ENCODE measurements at regions of chr12 and their contacts with region 1.

Region 1: GRCh38 chr12:92136965-92137721 is 8.5 kb downstream of the BTG1 start:
- DNase-seq: no peak
- H3K4me3 Mint-ChIP-seq: peak overlapping the region; percentile 100
- H3K27ac Mint-ChIP-seq: peak overlapping the region; percentile 91
- H3K4me1 Mint-ChIP-seq: peaks cover 65% of the 10 kb centered on the region
- H3K27me3 Mint-ChIP-seq: no peaks in the 10 kb centered on the region

Region 2: DNA sequence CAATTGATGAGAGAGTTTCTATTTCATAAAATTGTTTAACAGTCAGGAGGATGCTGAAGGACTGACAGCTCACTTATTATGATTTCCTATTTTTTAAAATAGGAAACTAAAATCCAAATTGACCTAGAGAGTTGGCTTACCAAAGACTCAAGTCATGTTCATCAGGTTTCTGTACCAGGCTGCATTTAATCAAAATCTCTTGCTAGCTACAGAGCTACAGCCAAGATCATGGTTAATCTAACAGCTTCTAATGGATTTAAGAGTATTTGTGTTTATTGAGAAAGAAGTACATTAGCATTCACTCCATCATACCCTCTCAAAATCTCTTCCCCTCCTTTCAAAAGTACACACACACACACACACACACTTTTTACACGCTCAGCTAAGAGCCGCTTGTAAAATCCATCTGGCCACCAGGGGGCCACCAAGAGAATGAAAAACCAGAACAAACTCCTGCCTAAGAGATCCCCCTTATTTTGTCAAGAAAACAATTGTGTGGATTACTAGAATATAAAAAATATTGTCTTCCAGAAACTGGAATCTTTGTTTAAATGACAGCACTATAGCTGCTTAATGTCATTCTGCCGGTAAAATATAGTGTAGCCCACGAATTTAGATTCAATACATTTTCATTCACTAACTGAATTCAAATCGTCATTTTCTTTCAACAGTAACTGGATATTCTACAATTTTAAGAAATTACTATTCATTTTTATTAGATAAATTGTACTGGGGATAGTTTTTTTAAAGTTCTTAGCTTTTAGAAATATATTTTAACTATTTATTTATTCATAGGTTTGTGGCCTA is 325.5 kb before region 1 on chr12:
- CTCF ChIA-PET with region 1: interaction called, 31 read pairs
- POLR2A ChIA-PET with region 1: no interaction called
- intact Hi-C with region 1: loop called (anchors 2 kb)
- DNase-seq: peak; percentile 80
- H3K4me3 Mint-ChIP-seq: no peak overlapping the region
- H3K27ac Mint-ChIP-seq: no peak overlapping the region
- H3K4me1 Mint-ChIP-seq: peaks cover 20% of the 10 kb centered on the region
- H3K27me3 Mint-ChIP-seq: no peaks in the 10 kb centered on the region

Region 3: GRCh38 chr12:92049403-92049802 is 87.7 kb before region 1 on chr12:
- CTCF ChIA-PET with region 1: interaction called, 3 read pairs
- POLR2A ChIA-PET with region 1: interaction called, 5 read pairs
- intact Hi-C with region 1: loop called (anchors 2 kb)
- DNase-seq: no peak
- H3K4me3 Mint-ChIP-seq: no peak overlapping the region
- H3K27ac Mint-ChIP-seq: no peak overlapping the region
- H3K4me1 Mint-ChIP-seq: peaks cover 70% of the 10 kb centered on the region
- H3K27me3 Mint-ChIP-seq: no peaks in the 10 kb centered on the region

Region 4: GRCh38 chr12:92078167-92079053 is 58.7 kb before region 1 on chr12:
- CTCF ChIA-PET with region 1: interaction called, 3 read pairs
- POLR2A ChIA-PET with region 1: no interaction called
- intact Hi-C with region 1: loop called (anchors 2 kb)
- DNase-seq: peak; percentile 36
- H3K4me3 Mint-ChIP-seq: no peak overlapping the region
- H3K27ac Mint-ChIP-seq: peak overlapping the region; percentile 70
- H3K4me1 Mint-ChIP-seq: peaks cover 60% of the 10 kb centered on the region
- H3K27me3 Mint-ChIP-seq: no peaks in the 10 kb centered on the region

Region 5: GRCh38 chr12:92123780-92124688 is 13.1 kb before region 1 on chr12:
- CTCF ChIA-PET with region 1: interaction called, 3 read pairs
- POLR2A ChIA-PET with region 1: no interaction called
- intact Hi-C with region 1: loop called (anchors 1 kb)
- DNase-seq: no peak
- H3K4me3 Mint-ChIP-seq: no peak overlapping the region
- H3K27ac Mint-ChIP-seq: peak overlapping the region; percentile 50
- H3K4me1 Mint-ChIP-seq: peaks cover 49% of the 10 kb centered on the region
- H3K27me3 Mint-ChIP-seq: no peaks in the 10 kb centered on the region

Region 6: DNA sequence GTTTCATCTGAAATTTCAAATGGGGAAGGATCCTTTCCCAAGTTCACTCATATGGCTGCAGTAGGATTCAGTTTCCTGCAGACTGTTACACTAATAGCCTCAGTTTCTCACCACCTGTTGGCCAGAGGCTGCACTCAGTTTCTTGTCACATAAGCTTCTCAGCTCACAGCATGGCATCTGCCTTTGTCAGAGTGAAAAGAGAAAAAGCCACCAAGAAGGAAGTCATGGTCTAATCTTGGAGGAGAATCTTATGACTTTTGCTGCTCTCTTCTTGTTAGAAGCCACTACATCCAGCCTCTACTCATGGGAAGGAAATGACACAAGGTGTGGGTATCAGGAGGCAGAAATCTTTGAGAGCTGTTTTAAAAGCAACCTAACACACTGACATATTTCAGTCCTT is 47.9 kb after region 1 on chr12:
- CTCF ChIA-PET with region 1: no interaction called
- POLR2A ChIA-PET with region 1: no interaction called
- intact Hi-C with region 1: no loop called
- DNase-seq: peak; percentile 49
- H3K4me3 Mint-ChIP-seq: no peak overlapping the region
- H3K27ac Mint-ChIP-seq: peak overlapping the region; percentile 47
- H3K4me1 Mint-ChIP-seq: peaks cover 46% of the 10 kb centered on the region
- H3K27me3 Mint-ChIP-seq: no peaks in the 10 kb centered on the region

Measured in activated CD4-positive, alpha-beta memory T cell treated with anti-CD3 and anti-CD28 coated beads for 36 hours (primary cell).